Activated CD4-positive, alpha-beta memory T cell treated with anti-CD3 and anti-CD28 coated beads for 36 hours (primary cell): ENCODE measurements at regions of chr2 and their contacts with region 1.

Region 1: DNA sequence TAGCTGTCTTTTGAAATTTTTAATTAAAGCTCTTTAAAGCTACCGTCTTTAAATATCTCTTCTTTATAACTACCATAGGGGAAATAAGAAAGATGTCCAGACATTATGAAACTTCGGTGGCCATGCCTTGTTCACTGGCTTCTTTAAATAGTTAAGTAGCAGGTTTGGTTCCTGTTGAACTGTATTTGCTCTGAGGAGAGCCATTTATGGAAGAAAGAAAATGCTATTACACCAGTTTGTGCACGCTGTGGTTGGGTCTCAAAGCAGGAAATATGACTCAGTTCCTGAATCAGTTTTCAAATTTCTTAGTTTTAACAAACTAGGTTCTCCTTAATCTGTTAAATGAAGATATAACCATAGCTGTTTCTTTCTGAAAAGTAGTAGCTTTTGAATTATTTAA is 12.2 kb downstream of the ARPC2 start:
- DNase-seq: peak; percentile 63
- H3K4me3 Mint-ChIP-seq: peak overlapping the region; percentile 4
- H3K27ac Mint-ChIP-seq: peak overlapping the region; percentile 91
- H3K4me1 Mint-ChIP-seq: peaks cover 74% of the 10 kb centered on the region
- H3K27me3 Mint-ChIP-seq: no peaks in the 10 kb centered on the region

Region 2: DNA sequence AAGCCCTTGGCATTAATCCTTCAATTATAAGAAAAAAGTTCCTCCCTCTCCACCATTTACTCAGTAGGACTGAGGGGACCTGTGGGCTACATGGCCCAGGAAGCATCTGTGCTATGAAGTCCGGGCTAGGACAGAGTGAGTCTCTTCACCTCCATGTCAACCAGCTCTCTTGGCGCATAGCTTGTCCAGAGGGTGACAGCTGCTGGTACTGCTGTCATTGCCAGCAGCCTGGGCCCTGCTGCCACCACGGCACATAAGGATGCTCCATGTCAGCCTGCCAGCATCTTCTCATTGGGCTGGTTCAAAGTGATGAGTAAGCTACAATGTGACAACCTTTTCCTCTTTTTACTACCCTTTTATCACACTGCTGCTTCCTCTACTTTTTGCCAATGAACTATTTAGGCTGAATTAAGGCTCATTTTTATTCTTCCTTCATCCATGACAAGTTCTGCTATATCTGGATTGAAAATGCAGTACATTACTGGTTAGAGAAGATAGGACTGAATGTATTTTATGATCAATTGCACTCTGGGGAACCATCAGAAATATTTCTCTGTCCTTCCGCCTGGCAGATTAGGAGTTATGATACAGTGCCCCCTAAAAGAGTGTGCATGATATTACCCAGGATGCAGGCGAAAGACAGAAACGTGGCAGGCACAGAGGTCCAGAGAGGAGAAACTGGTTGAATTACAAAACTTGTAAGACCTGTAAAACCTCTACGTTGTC is 1110.5 kb before region 1 on chr2:
- CTCF ChIA-PET with region 1: no interaction called
- POLR2A ChIA-PET with region 1: no interaction called
- intact Hi-C with region 1: no loop called
- DNase-seq: no peak
- H3K4me3 Mint-ChIP-seq: no peak overlapping the region
- H3K27ac Mint-ChIP-seq: no peak overlapping the region
- H3K4me1 Mint-ChIP-seq: no peaks in the 10 kb centered on the region
- H3K27me3 Mint-ChIP-seq: peaks cover 1% of the 10 kb centered on the region

Region 3: DNA sequence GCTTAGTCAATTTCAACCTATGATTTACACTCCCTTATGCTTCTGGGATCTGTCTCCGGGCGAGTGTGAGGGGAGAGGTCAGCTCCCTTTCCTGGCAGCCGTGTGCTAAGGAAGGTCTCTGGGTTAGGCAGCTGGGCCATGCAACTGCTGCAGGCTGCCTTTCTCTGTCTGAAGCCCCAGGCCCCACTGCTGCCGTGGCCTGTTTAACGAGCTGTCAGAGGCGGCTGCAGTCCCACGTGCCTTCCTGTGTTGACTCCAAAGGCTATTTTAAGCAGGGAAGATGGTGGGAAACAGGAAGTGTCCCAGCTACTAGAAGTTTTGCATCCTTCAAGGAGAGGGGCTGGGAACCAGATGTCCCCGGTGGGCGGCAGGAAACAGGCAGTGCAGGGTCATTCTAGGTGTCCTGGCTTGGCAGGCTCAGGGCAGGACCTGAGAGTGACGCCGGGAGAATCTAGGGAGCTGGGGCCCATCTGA is 412.8 kb before region 1 on chr2:
- CTCF ChIA-PET with region 1: no interaction called
- POLR2A ChIA-PET with region 1: no interaction called
- intact Hi-C with region 1: no loop called
- DNase-seq: no peak
- H3K4me3 Mint-ChIP-seq: no peak overlapping the region
- H3K27ac Mint-ChIP-seq: no peak overlapping the region
- H3K4me1 Mint-ChIP-seq: no peaks in the 10 kb centered on the region
- H3K27me3 Mint-ChIP-seq: peaks cover 2% of the 10 kb centered on the region

Region 4: GRCh38 chr2:218033590-218034496 is 195.4 kb before region 1 on chr2:
- CTCF ChIA-PET with region 1: no interaction called
- POLR2A ChIA-PET with region 1: no interaction called
- intact Hi-C with region 1: no loop called
- DNase-seq: no peak
- H3K4me3 Mint-ChIP-seq: no peak overlapping the region
- H3K27ac Mint-ChIP-seq: no peak overlapping the region
- H3K4me1 Mint-ChIP-seq: peaks cover 11% of the 10 kb centered on the region
- H3K27me3 Mint-ChIP-seq: no peaks in the 10 kb centered on the region

Region 5: GRCh38 chr2:218186355-218186766 is 42.9 kb before region 1 on chr2:
- CTCF ChIA-PET with region 1: interaction called, 4 read pairs
- POLR2A ChIA-PET with region 1: no interaction called
- intact Hi-C with region 1: loop called (anchors 1 kb)
- DNase-seq: peak; percentile 81
- H3K4me3 Mint-ChIP-seq: no peak overlapping the region
- H3K27ac Mint-ChIP-seq: no peak overlapping the region
- H3K4me1 Mint-ChIP-seq: peaks cover 6% of the 10 kb centered on the region
- H3K27me3 Mint-ChIP-seq: no peaks in the 10 kb centered on the region

Region 6: GRCh38 chr2:218216674-218217359 is 12.4 kb before region 1 on chr2 and contains the start of gene ARPC2:
- CTCF ChIA-PET with region 1: interaction called, 30 read pairs
- POLR2A ChIA-PET with region 1: interaction called, 10 read pairs
- intact Hi-C with region 1: loop called (anchors 1 kb)
- DNase-seq: peak; percentile 97
- H3K4me3 Mint-ChIP-seq: peak within 1 kb of the TSS; percentile 83
- H3K27ac Mint-ChIP-seq: peak within 1 kb of the TSS; percentile 91
- H3K4me1 Mint-ChIP-seq: peaks cover 34% of the 10 kb centered on the region
- H3K27me3 Mint-ChIP-seq: no peaks in the 10 kb centered on the region
- total RNA-seq, gene ARPC2: 564 to 570 TPM

Region 7: GRCh38 chr2:218286570-218287459 is 57.6 kb after region 1 on chr2:
- CTCF ChIA-PET with region 1: interaction called, 3 read pairs
- POLR2A ChIA-PET with region 1: interaction called, 5 read pairs
- intact Hi-C with region 1: loop called (anchors 1 kb)
- DNase-seq: peak; percentile 92
- H3K4me3 Mint-ChIP-seq: peak overlapping the region; percentile 82
- H3K27ac Mint-ChIP-seq: peak overlapping the region; percentile 98
- H3K4me1 Mint-ChIP-seq: peaks cover 81% of the 10 kb centered on the region
- H3K27me3 Mint-ChIP-seq: no peaks in the 10 kb centered on the region

Region 8: DNA sequence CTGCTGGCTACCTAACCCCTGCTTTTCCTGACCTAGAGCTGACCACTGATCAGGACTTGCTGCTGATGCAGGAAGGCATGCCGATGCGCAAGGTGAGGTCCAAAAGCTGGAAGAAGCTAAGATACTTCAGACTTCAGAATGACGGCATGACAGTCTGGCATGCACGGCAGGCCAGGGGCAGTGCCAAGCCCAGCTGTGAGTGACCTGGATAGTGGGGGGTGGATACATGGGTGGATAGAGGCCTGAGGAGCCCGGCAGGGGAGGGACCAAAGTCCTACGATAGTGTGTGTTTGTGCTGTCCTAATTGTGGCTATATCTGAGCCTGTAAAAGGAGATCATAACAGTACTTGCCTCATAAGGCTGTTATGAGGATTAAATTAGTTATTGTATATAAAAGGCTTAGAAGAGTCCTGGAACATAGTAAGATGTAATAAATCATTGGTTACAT is 386.7 kb after region 1 on chr2:
- CTCF ChIA-PET with region 1: no interaction called
- POLR2A ChIA-PET with region 1: no interaction called
- intact Hi-C with region 1: no loop called
- DNase-seq: no peak
- H3K4me3 Mint-ChIP-seq: no peak overlapping the region
- H3K27ac Mint-ChIP-seq: no peak overlapping the region
- H3K4me1 Mint-ChIP-seq: no peaks in the 10 kb centered on the region
- H3K27me3 Mint-ChIP-seq: no peaks in the 10 kb centered on the region